ENCODE measurements at regions of chr3 and their contacts with region 1.

Region 1: GRCh38 chr3:107676469-107677309 is 153.9 kb downstream of the BBX start:
- DNase-seq: no peak
- ATAC-seq: no peak
- H3K4me3 Mint-ChIP-seq: no peak overlapping the region
- H3K27ac Mint-ChIP-seq: no peak overlapping the region
- H3K4me1 Mint-ChIP-seq: peaks cover 4% of the 10 kb centered on the region
- H3K27me3 Mint-ChIP-seq: no peaks in the 10 kb centered on the region

Region 2: DNA sequence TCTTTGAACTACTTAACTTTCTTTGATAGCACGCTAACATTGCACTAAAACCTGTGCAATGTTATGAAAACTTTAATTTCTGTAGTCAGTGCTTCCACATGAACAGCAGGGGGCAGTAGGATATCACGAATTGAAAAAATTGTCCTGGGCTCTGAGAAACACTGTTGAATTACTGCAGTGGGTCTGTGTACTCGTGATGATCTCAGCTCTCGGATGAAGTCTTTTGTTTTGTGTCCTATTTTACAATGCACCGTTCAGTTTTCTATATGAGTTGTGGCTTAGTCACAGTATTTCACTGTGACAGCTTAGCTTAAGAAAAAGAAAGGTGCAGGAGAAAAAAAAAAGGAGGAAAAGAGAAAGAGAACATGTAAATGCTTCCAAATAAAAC is 440.8 kb before region 1 on chr3:
- CTCF ChIA-PET with region 1: interaction called, 18 read pairs
- POLR2A ChIA-PET with region 1: no interaction called
- DNase-seq: peak; percentile 70
- ATAC-seq: peak; percentile 51
- H3K4me3 Mint-ChIP-seq: peak overlapping the region; percentile 65
- H3K27ac Mint-ChIP-seq: no peak overlapping the region
- H3K4me1 Mint-ChIP-seq: peaks cover 18% of the 10 kb centered on the region
- H3K27me3 Mint-ChIP-seq: peaks cover 7% of the 10 kb centered on the region

Region 3: DNA sequence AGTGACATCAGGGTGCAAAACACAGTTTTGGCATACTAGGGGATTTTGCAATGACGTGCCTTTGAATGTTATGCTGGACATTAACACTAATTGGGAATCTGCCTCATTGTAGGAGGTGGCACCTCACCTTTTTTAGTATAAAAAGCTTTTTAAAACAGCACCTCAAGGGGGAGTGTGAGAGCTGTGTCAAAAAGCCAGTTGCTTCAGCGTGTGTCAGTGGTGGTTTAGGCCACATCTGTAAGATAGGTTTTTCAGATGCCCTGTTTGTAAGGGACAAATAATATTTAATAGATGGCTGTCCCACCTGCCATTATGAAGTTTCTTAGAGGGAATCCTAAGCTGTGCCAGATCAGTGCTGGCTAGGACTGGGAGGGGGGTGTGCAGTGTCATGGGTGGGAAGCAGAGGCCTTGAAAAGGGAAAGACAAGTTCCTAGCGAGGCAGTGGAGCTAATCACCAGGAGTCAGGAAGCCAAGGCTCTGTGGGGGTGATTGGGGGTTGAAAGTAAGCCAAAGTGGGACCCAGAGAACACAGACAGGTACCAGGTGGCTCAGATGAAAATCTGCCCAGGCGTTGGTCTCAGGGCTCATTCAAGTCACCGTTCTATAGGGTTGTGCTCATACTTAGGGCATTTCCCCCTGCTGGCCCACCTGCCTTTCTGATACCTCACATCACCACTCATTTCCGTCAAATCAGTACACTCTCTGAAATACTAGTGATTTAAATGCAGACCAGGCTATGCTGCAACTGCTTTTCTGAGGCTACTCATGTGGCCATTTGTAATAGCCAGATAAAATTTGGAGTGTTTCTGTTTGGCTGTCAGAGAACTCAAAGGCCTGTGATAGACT is 33.4 kb before region 1 on chr3:
- CTCF ChIA-PET with region 1: interaction called, 10 read pairs
- POLR2A ChIA-PET with region 1: no interaction called
- DNase-seq: no peak
- ATAC-seq: peak; percentile 23
- H3K4me3 Mint-ChIP-seq: no peak overlapping the region
- H3K27ac Mint-ChIP-seq: no peak overlapping the region
- H3K4me1 Mint-ChIP-seq: no peaks in the 10 kb centered on the region
- H3K27me3 Mint-ChIP-seq: no peaks in the 10 kb centered on the region

Region 4: DNA sequence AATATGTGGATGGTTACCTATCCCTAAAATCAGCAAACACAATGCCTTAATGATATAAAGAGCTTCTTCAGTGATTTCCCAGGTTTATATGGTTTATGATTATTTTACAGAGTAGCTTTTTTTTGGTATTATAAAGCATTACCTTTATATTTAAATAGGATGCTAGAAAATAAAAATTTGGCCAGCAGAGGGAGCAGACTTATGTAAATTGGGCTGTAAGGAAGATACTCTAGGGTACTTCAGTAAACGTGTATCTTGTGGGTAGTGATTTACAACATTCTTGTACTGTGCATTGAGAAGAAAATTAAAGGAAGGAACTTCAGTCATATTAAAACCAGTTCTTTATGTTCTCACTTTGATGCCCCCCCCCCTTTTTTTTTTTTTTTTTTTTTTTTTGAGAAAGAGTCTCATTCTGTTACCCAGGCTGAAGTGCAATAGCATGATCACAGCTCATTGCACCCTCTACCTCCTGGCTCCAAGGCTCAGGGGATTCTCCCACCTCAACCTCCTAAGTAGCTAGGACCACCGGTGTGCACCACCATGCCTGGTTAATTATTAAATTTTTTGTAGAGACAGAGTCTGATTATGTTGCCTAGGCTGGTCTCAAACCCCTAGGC is 13.9 kb after region 1 on chr3:
- CTCF ChIA-PET with region 1: interaction called, 13 read pairs
- POLR2A ChIA-PET with region 1: no interaction called
- DNase-seq: no peak
- ATAC-seq: peak; percentile 63
- H3K4me3 Mint-ChIP-seq: no peak overlapping the region
- H3K27ac Mint-ChIP-seq: no peak overlapping the region
- H3K4me1 Mint-ChIP-seq: no peaks in the 10 kb centered on the region
- H3K27me3 Mint-ChIP-seq: no peaks in the 10 kb centered on the region

Region 5: DNA sequence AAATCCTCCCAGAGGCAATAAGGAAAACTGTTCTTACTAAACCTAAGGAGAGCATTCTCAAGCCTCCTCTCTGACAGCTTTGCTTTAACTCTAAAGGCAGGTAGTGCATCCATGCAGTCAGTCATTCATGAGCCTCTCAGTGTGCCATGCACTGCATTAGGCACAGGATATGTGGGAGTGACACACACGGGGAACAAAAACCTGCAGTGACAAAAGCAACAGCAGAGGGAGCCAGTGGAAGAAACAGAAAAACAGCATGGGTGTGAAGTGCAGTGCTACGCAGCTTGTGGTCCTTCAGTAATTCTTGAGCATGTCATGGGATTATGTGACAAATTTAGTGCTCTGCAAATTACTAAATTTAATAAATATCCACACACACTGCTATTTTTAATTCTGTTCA is 76.8 kb after region 1 on chr3:
- CTCF ChIA-PET with region 1: interaction called, 47 read pairs
- POLR2A ChIA-PET with region 1: no interaction called
- DNase-seq: peak; percentile 38
- ATAC-seq: peak; percentile 68
- H3K4me3 Mint-ChIP-seq: no peak overlapping the region
- H3K27ac Mint-ChIP-seq: no peak overlapping the region
- H3K4me1 Mint-ChIP-seq: no peaks in the 10 kb centered on the region
- H3K27me3 Mint-ChIP-seq: no peaks in the 10 kb centered on the region

Region 6: GRCh38 chr3:108477511-108478147 is 800.9 kb after region 1 on chr3:
- CTCF ChIA-PET with region 1: interaction called, 11 read pairs
- POLR2A ChIA-PET with region 1: no interaction called
- DNase-seq: peak; percentile 75
- ATAC-seq: peak; percentile 55
- H3K4me3 Mint-ChIP-seq: no peak overlapping the region
- H3K27ac Mint-ChIP-seq: no peak overlapping the region
- H3K4me1 Mint-ChIP-seq: peaks cover 4% of the 10 kb centered on the region
- H3K27me3 Mint-ChIP-seq: peaks cover 4% of the 10 kb centered on the region

Measured in activated CD8-positive, alpha-beta T cell treated with anti-CD3 and anti-CD28 coated beads, Interleukin-2, amount 10 ng/mL, durations not matched to agents 7 days and 5 days (primary cell).